ENCODE measurements at regions of chr1 and their contacts with region 1.

Region 1: DNA sequence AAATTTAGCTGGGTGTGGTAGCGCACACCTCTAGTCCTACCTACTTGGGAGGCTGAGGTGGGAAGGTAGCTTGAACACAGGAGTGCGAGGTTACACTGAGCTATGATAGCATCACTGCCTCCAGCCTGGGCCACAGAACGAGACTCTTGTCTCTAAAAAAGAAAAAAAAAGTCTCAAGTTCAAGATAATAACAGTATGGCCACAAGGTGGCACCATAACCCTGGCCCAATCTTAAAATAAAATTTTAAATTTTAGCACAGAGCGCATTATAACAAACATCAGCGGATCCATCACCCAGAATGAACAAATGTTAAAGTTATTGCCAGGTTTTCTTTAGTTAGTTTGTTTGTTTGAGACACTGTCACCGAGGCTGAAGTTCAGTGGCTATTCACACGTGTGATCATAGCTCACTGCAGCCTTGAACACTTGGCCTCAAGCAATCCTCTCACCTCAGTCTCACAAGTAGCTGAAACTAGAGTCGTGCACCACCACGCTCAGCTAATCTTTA is 2.9 kb upstream of the HTR6 start:
- H3K4me3 ChIP-seq: no peak overlapping the region
- H3K27ac ChIP-seq: no peak overlapping the region
- H3K4me1 ChIP-seq: no peaks in the 10 kb centered on the region
- CTCF ChIP-seq: no peak

Region 2: GRCh38 chr1:19344372-19345230 is 317.2 kb before region 1 on chr1:
- CTCF ChIA-PET with region 1: interaction called, 19 read pairs
- POLR2A ChIA-PET with region 1: no interaction called
- H3K4me3 ChIP-seq: no peak overlapping the region
- H3K27ac ChIP-seq: no peak overlapping the region
- H3K4me1 ChIP-seq: no peaks in the 10 kb centered on the region
- CTCF ChIP-seq: peak; percentile 73

Region 3: GRCh38 chr1:19651141-19651737 is 10.5 kb before region 1 on chr1:
- CTCF ChIA-PET with region 1: interaction called, 17 read pairs
- POLR2A ChIA-PET with region 1: no interaction called
- H3K4me3 ChIP-seq: no peak overlapping the region
- H3K27ac ChIP-seq: no peak overlapping the region
- H3K4me1 ChIP-seq: no peaks in the 10 kb centered on the region
- CTCF ChIP-seq: peak; percentile 90

Region 4: GRCh38 chr1:19682257-19682656 is 20.5 kb after region 1 on chr1:
- CTCF ChIA-PET with region 1: interaction called, 18 read pairs
- POLR2A ChIA-PET with region 1: interaction called, 3 read pairs
- H3K4me3 ChIP-seq: no peak overlapping the region
- H3K27ac ChIP-seq: no peak overlapping the region
- H3K4me1 ChIP-seq: no peaks in the 10 kb centered on the region
- CTCF ChIP-seq: no peak

Region 5: GRCh38 chr1:19688041-19688842 is 26.5 kb after region 1 on chr1:
- CTCF ChIA-PET with region 1: interaction called, 18 read pairs
- POLR2A ChIA-PET with region 1: interaction called, 3 read pairs
- H3K4me3 ChIP-seq: no peak overlapping the region
- H3K27ac ChIP-seq: no peak overlapping the region
- H3K4me1 ChIP-seq: no peaks in the 10 kb centered on the region
- CTCF ChIP-seq: no peak

Region 6: DNA sequence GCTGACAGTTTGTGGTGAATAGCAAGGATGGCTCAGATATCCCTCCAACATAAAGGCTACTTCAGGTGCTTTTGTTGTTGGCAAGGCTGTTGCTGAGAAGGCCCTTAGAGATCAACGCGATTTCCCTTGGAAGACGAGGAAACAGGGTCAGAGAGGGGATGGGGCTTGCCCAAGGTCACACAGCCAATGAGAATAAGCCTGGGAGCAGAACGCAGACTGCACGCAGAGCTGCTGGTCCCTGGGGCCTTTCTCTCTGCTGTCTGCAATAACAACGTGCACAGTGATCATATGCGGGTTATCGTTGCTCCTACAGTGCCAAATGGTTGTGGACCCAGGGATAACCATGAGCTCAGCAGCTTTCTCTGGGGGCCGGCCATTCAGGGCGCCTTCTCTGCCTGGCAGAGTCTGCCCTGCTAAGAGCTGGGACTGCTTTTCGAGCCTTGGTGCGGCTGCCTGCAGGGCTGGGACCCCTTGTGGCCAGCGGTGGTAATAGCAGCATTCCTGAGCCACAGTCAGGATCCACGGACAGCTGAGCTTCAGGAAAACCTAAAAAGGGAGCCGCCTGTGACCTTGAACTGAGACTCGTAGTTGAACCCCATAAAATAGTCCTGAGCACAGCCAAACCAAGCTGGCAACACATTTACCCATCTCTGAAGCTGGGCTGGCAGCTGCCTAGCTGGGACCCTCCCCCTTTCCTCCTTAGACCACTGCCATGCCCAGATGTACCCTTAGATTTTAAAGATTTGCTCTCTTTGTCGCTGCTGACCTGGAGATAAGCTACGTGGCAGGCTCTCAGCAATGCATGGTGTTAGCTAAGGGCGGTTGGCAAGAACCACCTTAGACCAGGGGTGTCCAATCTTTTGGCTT is 42.7 kb after region 1 on chr1:
- CTCF ChIA-PET with region 1: interaction called, 140 read pairs
- POLR2A ChIA-PET with region 1: no interaction called
- H3K4me3 ChIP-seq: no peak overlapping the region
- H3K27ac ChIP-seq: no peak overlapping the region
- H3K4me1 ChIP-seq: no peaks in the 10 kb centered on the region
- CTCF ChIP-seq: peak; percentile 77

Region 7: DNA sequence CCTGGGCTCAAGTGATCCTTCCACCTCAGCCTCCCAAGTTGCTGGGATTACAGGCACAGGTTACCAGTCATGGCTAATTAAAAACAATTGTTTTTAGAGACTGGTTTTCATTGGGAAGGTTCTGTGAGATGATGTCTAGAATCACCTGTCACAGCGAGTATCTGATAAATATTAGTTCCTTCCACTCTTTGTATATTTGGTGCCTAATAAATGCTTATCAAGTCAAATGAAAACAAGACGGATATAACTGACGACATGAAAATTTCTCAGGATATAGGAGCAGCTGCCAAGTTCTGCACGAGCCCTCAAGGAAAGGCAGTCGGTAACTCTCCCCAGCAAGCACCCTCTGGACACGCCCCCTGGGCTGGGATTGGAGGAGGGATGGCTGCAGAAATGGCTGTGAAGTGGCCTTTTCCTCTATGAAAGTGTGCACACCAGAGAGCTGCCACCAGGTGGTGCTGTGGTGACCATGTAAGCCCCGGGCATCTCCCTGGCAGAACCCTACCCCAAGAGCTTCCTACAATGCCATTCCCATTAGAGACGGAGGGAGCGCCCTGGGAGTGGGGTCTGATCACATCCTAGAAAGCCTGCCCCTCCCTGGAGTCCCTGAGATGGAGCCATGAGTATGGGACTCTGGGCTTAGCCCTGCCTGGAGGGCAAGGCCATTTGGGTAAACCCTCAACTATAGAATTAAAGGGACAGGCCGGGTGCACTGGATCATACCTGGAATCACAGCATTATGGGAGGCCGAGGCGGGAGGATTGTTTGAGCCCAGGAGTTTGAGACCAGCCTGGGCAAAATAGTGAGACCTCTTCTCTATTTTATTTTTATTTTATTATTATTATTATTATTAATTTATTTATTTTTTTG is 53.8 kb after region 1 on chr1:
- CTCF ChIA-PET with region 1: interaction called, 15 read pairs
- POLR2A ChIA-PET with region 1: no interaction called
- H3K4me3 ChIP-seq: no peak overlapping the region
- H3K27ac ChIP-seq: no peak overlapping the region
- H3K4me1 ChIP-seq: no peaks in the 10 kb centered on the region
- CTCF ChIP-seq: peak; percentile 89

Measured in HEK293 (cell line).